G401 (cell line): ENCODE measurements at regions of chr12 and their contacts with region 1.

Region 1: DNA sequence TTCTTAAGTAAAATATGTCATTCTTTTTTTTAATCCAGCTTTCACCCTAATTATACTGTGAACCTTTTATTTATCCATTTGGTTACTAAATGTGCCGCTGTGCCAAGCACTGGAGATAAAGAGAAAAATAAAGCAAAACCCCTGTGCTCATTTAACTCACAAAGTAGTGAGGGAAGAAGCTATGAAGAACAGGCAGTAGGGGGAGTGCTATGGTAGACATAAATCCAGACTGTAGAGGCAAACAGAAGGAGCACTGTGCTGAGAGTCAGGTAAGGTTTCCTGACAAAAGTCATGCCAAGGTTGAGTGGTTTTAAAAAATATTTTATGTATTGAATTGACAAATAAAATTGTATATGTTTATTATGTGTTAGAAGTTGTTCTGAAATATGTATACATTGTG is 188.5 kb upstream of the SYT10 start:
- DNase-seq: no peak

Region 2: GRCh38 chr12:33560713-33561112 is 67.4 kb before region 1 on chr12:
- in situ Hi-C with region 1: no loop called
- DNase-seq: no peak

Region 3: GRCh38 chr12:33671676-33672075 is 43.6 kb after region 1 on chr12:
- in situ Hi-C with region 1: loop called (anchors 10 kb)
- DNase-seq: no peak